CD14-positive monocyte (primary cell): ENCODE measurements at regions of chr4 and their contacts with region 1.

Region 1: GRCh38 chr4:692771-693554 is 4.0 kb upstream of the SLC49A3 start:
- DNase-seq: no peak
- H3K4me3 ChIP-seq: no peak overlapping the region
- H3K4me3 Mint-ChIP-seq: peak overlapping the region in 1 of 2 donors; percentile 39
- H3K27ac ChIP-seq: no peak overlapping the region
- H3K27ac Mint-ChIP-seq: peak overlapping the region in 1 of 7 donors; percentile 38
- H3K4me1 ChIP-seq: peaks cover 24 to 25% of the 10 kb centered on the region in 2 donors
- H3K4me1 Mint-ChIP-seq: peaks cover 22% of the 10 kb centered on the region
- H3K27me3 ChIP-seq: no peaks in the 10 kb centered on the region
- H3K27me3 Mint-ChIP-seq: peaks cover 11 to 24% (median 20%) of the 10 kb centered on the region in 3 donors
- CTCF ChIP-seq: no peak

Region 2: DNA sequence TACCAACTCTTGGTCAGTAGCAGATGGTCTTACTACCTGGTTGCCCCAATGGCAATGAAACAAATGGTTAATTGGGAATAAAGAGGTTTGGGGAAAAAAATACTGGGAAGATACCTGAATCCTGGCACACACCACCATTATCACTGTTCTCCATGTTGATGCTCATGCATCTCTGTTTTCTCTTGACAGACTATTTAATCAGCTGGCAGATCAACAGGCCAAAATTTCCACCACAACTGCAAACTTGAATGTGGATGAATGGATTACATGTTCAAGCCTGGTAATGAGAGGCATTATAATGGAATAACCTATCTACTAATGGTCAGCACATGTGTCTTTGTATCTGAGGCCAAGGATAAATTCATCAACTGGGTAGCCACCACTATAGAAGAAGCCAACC is 239.7 kb before region 1 on chr4:
- intact Hi-C with region 1: no loop called
- DNase-seq: no peak
- H3K4me3 ChIP-seq: peak overlapping the region in 1 of 3 experiments; percentile 37
- H3K4me3 Mint-ChIP-seq: no peak overlapping the region
- H3K27ac ChIP-seq: no peak overlapping the region
- H3K27ac Mint-ChIP-seq: no peak overlapping the region
- H3K4me1 ChIP-seq: no peaks in the 10 kb centered on the region
- H3K4me1 Mint-ChIP-seq: no peaks in the 10 kb centered on the region
- H3K27me3 ChIP-seq: no peaks in the 10 kb centered on the region
- H3K27me3 Mint-ChIP-seq: no peaks in the 10 kb centered on the region
- CTCF ChIP-seq: no peak

Region 3: GRCh38 chr4:931960-932712 is 239.2 kb after region 1 on chr4 and contains the starts of genes GAK and TMEM175:
- intact Hi-C with region 1: loop called in 1 of 2 experiments (anchors 10 kb)
- DNase-seq: peak; percentile 96 to 97 (median 97)
- H3K4me3 ChIP-seq: peak within 1 kb of the TSS; percentile 92 to 97 (median 93)
- H3K4me3 Mint-ChIP-seq: peak within 1 kb of the TSS; percentile 96 to 98
- H3K27ac ChIP-seq: peak within 1 kb of the TSS; percentile 84 to 98
- H3K27ac Mint-ChIP-seq: peak within 1 kb of the TSS; percentile 96 to 99 (median 97)
- H3K4me1 ChIP-seq: peaks cover 69 to 76% of the 10 kb centered on the region in 2 donors
- H3K4me1 Mint-ChIP-seq: peaks cover 66% of the 10 kb centered on the region
- H3K27me3 ChIP-seq: no peaks in the 10 kb centered on the region
- H3K27me3 Mint-ChIP-seq: peaks cover 0 to 3% (median 3%) of the 10 kb centered on the region in 3 donors
- CTCF ChIP-seq: no peak
- polyA plus RNA-seq, gene GAK: 40.3 to 88.7 (median 54.9) TPM
- polyA plus RNA-seq, gene TMEM175: 18.9 to 216 (median 20.7) TPM